ENCODE measurements at regions of chr2 and their contacts with region 1.

Region 1: DNA sequence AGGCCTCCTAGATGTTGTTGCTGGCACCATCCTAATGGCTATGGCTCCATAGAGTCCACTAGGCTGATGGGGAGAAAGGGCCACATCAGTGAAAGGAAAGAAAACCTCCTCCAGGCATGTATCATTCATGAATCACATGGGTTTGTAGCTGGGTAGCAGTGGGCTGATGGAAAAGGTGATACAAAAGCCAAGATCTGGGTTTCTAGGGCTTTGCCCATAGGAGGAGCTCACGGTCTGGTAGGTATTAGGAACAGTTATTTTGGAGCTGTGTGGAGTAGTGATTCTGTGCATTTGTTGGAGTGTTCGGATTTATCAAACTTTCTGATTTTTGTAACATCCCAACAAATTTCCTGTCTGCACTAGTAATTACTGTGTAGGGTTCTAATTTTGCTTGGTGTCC is 259.2 kb downstream of the SLC4A3 start:
- DNase-seq: no peak
- ATAC-seq: no peak
- H3K4me3 ChIP-seq: no peak overlapping the region
- H3K27ac ChIP-seq: no peak overlapping the region
- H3K4me1 ChIP-seq: no peaks in the 10 kb centered on the region
- H3K27me3 ChIP-seq: no peaks in the 10 kb centered on the region
- CTCF ChIP-seq: no peak

Region 2: GRCh38 chr2:219736209-219736608 is 150.4 kb before region 1 on chr2:
- CTCF ChIA-PET with region 1: no interaction called
- POLR2A ChIA-PET with region 1: no interaction called
- in situ Hi-C with region 1: no loop called
- intact Hi-C with region 1: no loop called
- DNase-seq: peak; percentile 15
- ATAC-seq: peak; percentile 71
- H3K4me3 ChIP-seq: no peak overlapping the region
- H3K27ac ChIP-seq: no peak overlapping the region
- H3K4me1 ChIP-seq: no peaks in the 10 kb centered on the region
- H3K27me3 ChIP-seq: 0 out of 2 replicates have a peak, but pooled peaks cover 2% of the 10 kb centered on the region
- CTCF ChIP-seq: peak; percentile 59; the same call in 1 of the 2 replicates

Region 3: DNA sequence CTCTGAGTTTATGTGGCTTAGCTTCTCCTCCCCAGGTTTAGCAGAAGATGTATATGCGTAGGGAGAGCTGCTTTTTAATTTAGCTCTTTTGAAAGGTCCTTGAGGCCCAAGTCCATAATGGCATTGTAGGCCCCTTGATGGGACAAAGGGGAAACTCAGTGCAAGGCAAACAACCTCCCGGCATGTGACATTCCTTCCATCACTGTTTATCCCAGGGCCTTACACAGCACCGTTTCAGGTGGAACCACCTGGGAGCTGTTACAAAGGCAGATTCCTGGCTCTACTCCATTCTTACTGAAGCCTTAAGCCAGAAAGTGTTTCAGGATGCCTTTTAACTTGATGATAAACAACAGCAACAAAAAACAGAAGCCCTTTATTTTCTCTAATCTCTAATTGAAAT is 296.2 kb after region 1 on chr2:
- CTCF ChIA-PET with region 1: interaction called, 15 read pairs
- POLR2A ChIA-PET with region 1: no interaction called
- in situ Hi-C with region 1: no loop called
- intact Hi-C with region 1: no loop called
- DNase-seq: no peak
- ATAC-seq: no peak
- H3K4me3 ChIP-seq: no peak overlapping the region
- H3K27ac ChIP-seq: no peak overlapping the region
- H3K4me1 ChIP-seq: no peaks in the 10 kb centered on the region
- H3K27me3 ChIP-seq: no peaks in the 10 kb centered on the region
- CTCF ChIP-seq: no peak